ENCODE measurements at regions of chr12 and their contacts with region 1.

Region 1: DNA sequence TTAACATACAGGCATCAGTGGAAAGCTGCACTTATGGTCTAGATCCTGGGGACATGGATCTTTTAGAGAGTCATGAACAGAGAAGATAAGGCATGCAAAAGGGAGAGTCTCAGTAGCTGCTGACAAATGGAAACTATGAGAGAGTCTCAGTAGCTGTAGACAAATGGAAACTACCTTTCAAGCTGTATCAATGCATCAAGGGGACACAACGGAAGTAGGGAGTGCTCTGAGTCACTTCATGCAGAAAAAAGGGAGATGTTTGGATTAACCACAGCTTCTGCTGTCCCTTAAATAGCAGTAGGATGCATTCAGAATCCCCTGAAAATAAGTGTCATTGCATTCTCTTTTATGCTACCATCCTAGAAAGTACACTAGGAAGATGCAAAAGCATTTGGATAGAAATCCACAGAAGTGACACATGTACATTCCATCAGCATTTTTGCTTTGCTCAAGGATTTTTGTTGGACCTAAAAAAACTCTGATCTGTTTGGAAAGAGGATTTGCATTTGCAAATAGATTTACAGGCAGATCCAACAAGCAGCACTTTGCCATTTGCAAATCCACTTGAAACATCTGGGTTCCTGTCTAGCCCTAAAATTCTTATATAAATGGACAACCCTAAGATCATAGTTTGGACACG is 227.5 kb upstream of the LMO3 start:
- DNase-seq: peak; percentile 33
- ATAC-seq: peak; percentile 82
- H3K4me3 ChIP-seq: no peak overlapping the region
- H3K27ac ChIP-seq: no peak overlapping the region
- H3K4me1 ChIP-seq: no peaks in the 10 kb centered on the region
- H3K27me3 ChIP-seq: no peaks in the 10 kb centered on the region
- CTCF ChIP-seq: no peak
- EP300 ChIP-seq: peak; percentile 18 to 48; a peak in 2 of 4 replicates
- POLR2A ChIP-seq: no peak
- RAD21 ChIP-seq: no peak

Region 2: DNA sequence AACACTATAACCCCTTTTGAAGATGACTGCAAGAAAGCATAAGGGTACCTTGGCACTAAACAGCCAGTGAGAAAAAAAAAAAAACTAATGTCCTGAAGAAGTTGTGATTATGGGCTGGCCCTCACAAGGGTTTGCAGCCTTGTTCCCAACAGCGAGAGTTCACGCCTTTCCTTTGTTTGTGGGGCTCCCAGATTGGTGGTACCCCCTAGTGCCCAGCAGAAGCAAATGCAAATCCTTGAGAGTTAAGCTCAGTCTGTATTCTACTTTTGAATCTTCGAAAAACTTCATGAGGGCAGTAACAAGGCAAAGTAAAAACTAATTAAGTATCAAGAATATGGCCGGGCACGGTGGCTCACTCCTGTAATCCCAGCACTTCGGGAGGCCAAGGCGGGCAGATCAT is 11.4 kb after region 1 on chr12:
- CTCF ChIA-PET with region 1: interaction called, 4 read pairs
- POLR2A ChIA-PET with region 1: interaction called, 3 read pairs
- RAD21 ChIA-PET with region 1: interaction called, 10 read pairs
- SMC1A ChIA-PET with region 1: interaction called, 34 read pairs
- in situ Hi-C with region 1: no loop called
- intact Hi-C with region 1: no loop called
- DNase-seq: no peak
- ATAC-seq: peak; percentile 47; the same call in 2 of the 3 replicates
- H3K4me3 ChIP-seq: no peak overlapping the region
- H3K27ac ChIP-seq: no peak overlapping the region
- H3K4me1 ChIP-seq: no peaks in the 10 kb centered on the region
- H3K27me3 ChIP-seq: no peaks in the 10 kb centered on the region
- CTCF ChIP-seq: peak; percentile 5 to 27 (median 19); a peak in 2 of 6 replicates
- EP300 ChIP-seq: no peak
- POLR2A ChIP-seq: no peak
- RAD21 ChIP-seq: peak; percentile 34; the same call in 1 of the 2 replicates

Region 3: GRCh38 chr12:16891673-16892072 is 58.2 kb after region 1 on chr12:
- CTCF ChIA-PET with region 1: no interaction called
- POLR2A ChIA-PET with region 1: no interaction called
- RAD21 ChIA-PET with region 1: no interaction called
- SMC1A ChIA-PET with region 1: no interaction called
- in situ Hi-C with region 1: no loop called
- intact Hi-C with region 1: no loop called
- DNase-seq: no peak
- ATAC-seq: no peak
- H3K4me3 ChIP-seq: no peak overlapping the region
- H3K27ac ChIP-seq: no peak overlapping the region
- H3K4me1 ChIP-seq: no peaks in the 10 kb centered on the region
- H3K27me3 ChIP-seq: no peaks in the 10 kb centered on the region
- CTCF ChIP-seq: no peak
- EP300 ChIP-seq: no peak
- POLR2A ChIP-seq: no peak
- RAD21 ChIP-seq: no peak

Region 4: DNA sequence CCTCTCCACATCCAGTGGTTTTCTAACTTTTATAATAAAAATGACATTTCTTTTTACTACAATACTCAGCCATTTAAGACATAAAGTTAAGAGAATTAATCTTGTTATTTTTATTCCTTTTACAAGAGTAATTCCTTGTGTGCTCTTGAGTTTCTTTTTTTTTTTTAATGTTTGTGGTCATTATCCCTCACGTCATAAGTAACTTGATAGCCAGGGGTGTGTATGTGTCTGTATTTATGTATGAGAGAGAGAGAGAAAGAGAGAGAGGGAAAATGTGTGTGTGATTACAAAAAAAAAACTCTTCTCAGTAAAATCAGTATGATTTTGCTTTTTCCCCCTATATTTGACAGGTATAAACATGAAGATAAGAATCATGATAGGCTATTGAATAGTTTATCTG is 1221.4 kb after region 1 on chr12:
- CTCF ChIA-PET with region 1: no interaction called
- POLR2A ChIA-PET with region 1: no interaction called
- RAD21 ChIA-PET with region 1: no interaction called
- SMC1A ChIA-PET with region 1: no interaction called
- in situ Hi-C with region 1: no loop called
- intact Hi-C with region 1: no loop called
- DNase-seq: no peak
- ATAC-seq: no peak
- H3K4me3 ChIP-seq: no peak overlapping the region
- H3K27ac ChIP-seq: no peak overlapping the region
- H3K4me1 ChIP-seq: no peaks in the 10 kb centered on the region
- H3K27me3 ChIP-seq: no peaks in the 10 kb centered on the region
- CTCF ChIP-seq: no peak
- EP300 ChIP-seq: no peak
- POLR2A ChIP-seq: no peak
- RAD21 ChIP-seq: no peak

Measured in GM12878 (cell line).